Vagina (tissue), 2 donors: ENCODE measurements at regions of chr16 and their contacts with region 1.

Region 1: DNA sequence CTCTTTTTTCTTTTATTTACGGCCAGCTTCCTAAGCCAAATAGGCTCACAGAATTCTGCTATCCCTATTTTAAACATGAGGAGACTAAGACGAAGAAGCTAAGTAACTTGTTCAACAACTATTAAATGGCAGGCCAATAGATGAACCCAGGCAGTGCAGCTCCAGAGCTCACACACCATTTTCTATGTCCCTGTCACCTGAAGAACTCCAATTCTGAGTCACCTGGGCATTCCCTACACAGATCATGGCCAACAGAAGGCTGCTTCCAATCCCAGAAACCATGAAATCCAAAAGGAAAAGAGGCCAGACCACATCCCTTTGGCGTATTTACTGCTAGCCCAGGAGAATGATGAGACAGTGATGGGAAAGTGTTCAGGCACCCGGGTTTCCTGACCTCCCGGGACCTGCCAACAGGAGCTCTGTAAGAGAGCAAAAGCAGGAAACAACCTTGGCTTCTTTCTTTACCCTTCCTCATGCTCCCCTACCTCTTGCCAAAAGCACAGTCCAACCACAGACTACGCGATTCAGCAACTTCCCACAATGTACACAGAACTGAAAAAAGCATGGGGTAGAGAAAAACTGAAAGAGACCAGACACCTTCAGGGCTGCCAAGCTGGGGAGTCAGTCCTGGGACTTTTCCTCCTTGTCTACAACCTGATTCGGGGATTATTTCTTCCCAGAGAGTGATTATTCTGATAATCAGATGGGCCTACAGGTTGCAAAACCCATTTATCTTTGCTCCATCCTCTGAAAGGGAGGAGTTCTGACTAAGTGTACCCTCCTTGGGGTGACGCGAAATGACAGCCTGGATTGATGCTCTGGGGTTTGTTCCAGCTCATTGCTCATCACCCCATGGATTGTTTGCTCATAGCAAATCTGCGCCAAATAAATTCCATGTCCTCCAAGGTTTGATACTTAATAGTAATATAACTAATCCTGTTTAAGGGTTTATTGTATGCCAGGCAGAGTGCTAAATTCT is 47.8 kb upstream of the HAS3 start:
- DNase-seq: no peak
- H3K4me3 ChIP-seq: no peak overlapping the region
- H3K27ac ChIP-seq: peak overlapping the region; percentile 46
- H3K4me1 ChIP-seq: peaks cover 6% of the 10 kb centered on the region
- H3K27me3 ChIP-seq: no peaks in the 10 kb centered on the region
- CTCF ChIP-seq: no peak
- POLR2A ChIP-seq: no peak

Region 2: DNA sequence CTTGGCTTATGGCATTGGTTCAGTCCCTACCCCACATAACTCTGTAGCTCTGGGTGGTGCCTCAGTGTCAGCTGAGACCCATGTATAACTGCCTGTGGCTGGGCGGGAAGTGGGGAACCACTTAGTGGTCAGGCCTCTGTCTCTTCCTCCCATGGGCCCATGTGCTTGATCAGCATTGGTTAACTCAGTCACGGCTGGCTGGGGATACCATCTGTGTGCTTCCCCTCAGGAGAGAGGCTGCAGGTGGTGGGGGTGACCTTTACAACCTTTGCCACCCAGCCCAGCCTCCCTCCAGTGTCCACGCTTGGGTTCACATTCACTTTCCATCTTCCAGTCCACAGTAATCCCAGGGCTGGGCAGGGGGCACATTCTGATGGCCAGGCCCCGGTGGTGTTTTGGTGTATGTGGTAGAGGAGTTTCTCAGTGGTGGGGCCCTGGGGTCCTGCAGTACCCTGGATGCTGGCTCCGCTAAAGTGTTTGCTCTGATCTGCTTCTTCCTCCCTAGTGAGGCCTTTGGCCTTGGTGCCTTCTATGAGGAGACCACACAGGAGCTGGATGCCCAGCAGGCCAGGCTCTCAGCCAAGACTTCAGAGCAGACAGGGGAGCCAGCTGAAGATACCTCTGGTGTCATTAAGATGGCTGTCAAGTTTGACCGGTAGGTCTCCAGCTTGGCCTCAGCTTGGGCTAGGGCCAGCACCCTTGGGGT is 982.7 kb before region 1 on chr16:
- intact Hi-C with region 1: no loop called
- DNase-seq: peak in 1 of 2 donors; percentile 81
- H3K4me3 ChIP-seq: no peak overlapping the region
- H3K27ac ChIP-seq: no peak overlapping the region
- H3K4me1 ChIP-seq: peaks cover 24% of the 10 kb centered on the region
- H3K27me3 ChIP-seq: no peaks in the 10 kb centered on the region
- CTCF ChIP-seq: no peak
- POLR2A ChIP-seq: no peak

Region 3: DNA sequence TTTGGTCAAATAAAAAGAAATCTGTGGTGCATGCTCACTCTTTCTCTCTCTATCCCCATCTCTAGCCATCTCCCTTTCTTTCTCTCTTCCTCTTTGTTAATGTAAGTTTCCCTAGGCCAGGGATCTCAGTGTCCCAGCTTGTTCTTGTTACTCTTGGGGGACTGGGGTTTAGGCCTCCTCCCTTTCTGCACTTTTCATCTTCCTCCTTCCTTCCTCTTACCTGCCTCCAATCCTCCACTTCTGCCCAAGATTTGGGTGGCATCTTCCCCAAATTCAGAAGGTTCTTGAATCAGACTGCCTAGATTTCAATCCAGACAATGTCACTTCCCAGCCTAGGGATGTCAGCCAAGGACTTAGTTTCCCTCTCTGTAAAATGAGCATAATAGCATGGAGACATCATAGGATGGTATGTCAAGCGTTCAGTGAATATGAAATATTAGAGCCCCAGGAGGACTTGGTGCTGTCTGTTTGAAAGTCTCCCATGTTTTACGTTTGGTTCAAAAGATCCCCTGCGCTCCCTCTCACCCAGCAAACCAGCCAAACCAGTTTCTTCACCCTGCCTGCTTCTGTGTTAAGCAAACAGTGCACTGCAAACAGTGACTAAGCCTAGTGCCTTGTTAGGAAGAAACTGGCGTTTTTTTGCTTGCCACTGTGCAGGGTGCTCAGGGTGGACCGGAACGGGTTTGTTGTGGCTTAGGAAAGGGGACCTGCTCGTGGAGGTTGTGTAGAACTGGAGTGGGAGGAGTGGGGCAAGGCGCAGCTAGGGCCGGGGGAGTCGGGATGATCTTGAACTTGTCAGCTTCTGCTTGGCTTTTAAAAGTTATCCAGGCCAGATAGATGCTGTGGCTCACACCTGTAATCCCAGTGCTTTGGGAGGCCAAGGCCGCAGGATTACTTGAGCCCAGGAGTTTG is 313.1 kb before region 1 on chr16:
- intact Hi-C with region 1: loop called (anchors 5 kb)
- DNase-seq: no peak
- H3K4me3 ChIP-seq: no peak overlapping the region
- H3K27ac ChIP-seq: peak overlapping the region; percentile 55
- H3K4me1 ChIP-seq: peaks cover 13% of the 10 kb centered on the region
- H3K27me3 ChIP-seq: no peaks in the 10 kb centered on the region
- CTCF ChIP-seq: no peak
- POLR2A ChIP-seq: no peak

Region 4: GRCh38 chr16:69083329-69083941 is 25.7 kb after region 1 on chr16:
- intact Hi-C with region 1: no loop called
- DNase-seq: no peak
- H3K4me3 ChIP-seq: no peak overlapping the region
- H3K27ac ChIP-seq: no peak overlapping the region
- H3K4me1 ChIP-seq: no peaks in the 10 kb centered on the region
- H3K27me3 ChIP-seq: no peaks in the 10 kb centered on the region
- CTCF ChIP-seq: no peak
- POLR2A ChIP-seq: no peak

Region 5: DNA sequence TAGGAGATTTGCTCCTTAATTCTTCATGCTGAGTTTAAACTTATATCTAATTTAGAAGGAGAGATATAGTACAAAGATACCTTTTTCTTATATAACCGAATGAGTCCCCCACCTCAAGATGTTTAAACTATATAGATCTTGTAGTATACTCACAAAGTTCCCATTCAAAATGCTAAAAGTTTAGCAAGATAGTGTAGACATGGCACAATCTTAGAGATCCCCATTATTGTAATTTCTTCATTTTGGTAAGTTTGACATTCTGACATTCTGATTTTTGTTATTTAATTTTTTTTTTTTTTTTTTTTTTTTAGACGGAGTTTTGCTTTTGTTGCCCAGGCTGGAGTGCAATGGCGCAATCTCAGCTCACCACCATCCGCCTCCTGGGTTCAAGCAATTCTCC is 152.0 kb after region 1 on chr16:
- intact Hi-C with region 1: no loop called
- DNase-seq: no peak
- H3K4me3 ChIP-seq: no peak overlapping the region
- H3K27ac ChIP-seq: no peak overlapping the region
- H3K4me1 ChIP-seq: peaks cover 14% of the 10 kb centered on the region
- H3K27me3 ChIP-seq: no peaks in the 10 kb centered on the region
- CTCF ChIP-seq: no peak
- POLR2A ChIP-seq: no peak

Region 6: GRCh38 chr16:69324013-69324531 is 266.4 kb after region 1 on chr16:
- intact Hi-C with region 1: no loop called
- DNase-seq: no peak
- H3K4me3 ChIP-seq: no peak overlapping the region
- H3K27ac ChIP-seq: no peak overlapping the region
- H3K4me1 ChIP-seq: peaks cover 57% of the 10 kb centered on the region
- H3K27me3 ChIP-seq: no peaks in the 10 kb centered on the region
- CTCF ChIP-seq: no peak
- POLR2A ChIP-seq: no peak